Esophagus muscularis mucosa (tissue), 4 donors: ENCODE measurements at regions of chr21 and their contacts with region 1.

Region 1: GRCh38 chr21:25708467-25709065 is 26.1 kb downstream of the ATP5PF start:
- DNase-seq: no peak
- H3K4me3 ChIP-seq: no peak overlapping the region
- H3K27ac ChIP-seq: no peak overlapping the region
- H3K4me1 ChIP-seq: peaks cover 0 to 3% (median 0%) of the 10 kb centered on the region in 4 donors
- H3K27me3 ChIP-seq: no peaks in the 10 kb centered on the region
- CTCF ChIP-seq: peak; percentile 82 to 85 (median 83)
- EP300 ChIP-seq: no peak
- POLR2A ChIP-seq: no peak

Region 2: DNA sequence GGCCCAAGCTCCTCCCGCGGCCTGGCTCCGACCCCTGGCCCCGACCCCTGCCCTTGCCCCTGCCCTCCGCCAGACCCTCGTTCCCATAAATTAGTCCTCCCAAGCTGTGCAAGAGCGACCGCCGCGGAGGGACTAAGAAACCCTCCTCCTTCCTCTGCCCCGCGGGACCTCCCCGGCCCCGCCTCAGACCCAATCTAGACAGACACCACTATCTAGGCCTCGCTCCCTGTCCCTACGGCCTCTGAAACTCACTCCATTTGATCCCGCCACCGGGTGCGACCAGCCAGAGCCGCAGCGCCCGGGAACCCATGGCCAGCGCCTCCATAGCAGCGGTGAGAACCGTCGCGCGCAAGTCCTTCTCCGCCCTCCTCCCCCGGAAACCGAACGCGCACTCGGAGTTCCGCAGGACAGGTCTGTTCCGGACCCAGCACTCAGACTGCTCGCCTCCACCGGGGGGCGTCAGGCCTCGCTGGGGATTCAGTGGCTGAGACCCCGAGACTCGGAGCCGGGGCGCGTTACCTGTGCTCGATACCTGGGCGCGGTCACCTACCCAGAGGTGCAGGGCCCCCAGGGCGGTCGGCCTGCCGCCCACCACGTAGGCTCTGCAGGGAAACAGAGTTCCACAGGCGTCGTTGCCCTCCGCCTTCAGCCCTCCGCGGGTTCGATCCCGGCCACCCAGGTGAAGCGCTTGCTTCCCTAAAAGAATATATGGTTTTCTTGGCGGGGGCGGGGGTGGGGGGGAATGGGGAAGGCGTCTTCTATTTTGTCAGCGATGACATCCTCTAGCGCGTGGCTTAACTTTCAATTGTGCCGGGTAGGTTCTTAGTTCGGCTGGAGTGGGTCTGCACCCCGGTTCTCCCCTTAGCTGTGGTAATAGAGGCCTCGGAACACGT is 101.2 kb before region 1 on chr21 and contains the start of gene MRPL39:
- intact Hi-C with region 1: loop called (anchors 1 kb)
- DNase-seq: peak; percentile 95
- H3K4me3 ChIP-seq: peak within 1 kb of the TSS; percentile 65 to 93 (median 82)
- H3K27ac ChIP-seq: peak within 1 kb of the TSS; percentile 77 to 88 (median 83)
- H3K4me1 ChIP-seq: peaks cover 13 to 55% (median 37%) of the 10 kb centered on the region in 4 donors
- H3K27me3 ChIP-seq: no peaks in the 10 kb centered on the region
- CTCF ChIP-seq: peak; percentile 44 to 59 (median 54)
- EP300 ChIP-seq: no peak
- POLR2A ChIP-seq: no peak
- total RNA-seq, gene MRPL39: 22.0 to 31.8 (median 27.4) TPM

Region 3: DNA sequence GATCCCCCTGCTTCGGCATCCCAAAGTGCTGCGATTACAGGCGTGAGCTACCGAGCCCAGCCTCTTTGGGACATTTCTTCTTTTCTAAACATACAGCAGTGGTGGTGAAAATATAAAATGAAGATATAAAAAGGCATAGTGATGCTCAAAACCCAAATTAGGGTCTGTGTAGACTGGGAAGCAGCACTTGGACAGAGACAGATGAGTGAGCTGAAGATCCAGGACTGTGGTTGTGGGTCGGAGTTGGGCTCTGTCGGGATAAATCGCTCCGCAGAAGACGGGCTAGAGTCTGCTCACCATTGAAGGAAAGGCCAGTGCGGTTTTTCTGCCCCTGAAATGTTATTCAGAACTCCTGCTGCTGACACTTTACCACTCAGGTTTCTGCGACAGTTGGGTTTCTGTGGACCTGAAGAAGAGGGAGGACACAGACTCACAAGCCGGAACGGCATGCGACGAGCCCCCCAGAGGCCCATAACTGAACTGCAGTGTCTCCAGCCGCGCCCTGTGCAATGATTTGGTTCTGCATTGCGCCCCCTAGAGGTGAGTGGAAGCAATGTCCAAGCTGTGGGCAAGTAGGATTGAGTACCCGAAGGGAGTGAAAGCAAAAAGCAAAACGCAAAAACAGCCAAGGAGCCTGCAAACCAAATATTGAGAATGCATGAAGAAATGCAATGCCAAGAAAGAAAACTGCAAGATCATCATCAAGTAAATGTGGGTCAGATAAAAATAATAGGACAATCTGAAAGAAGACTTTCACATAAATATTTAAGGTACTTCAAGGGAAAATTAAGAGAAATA is 92.8 kb after region 1 on chr21:
- intact Hi-C with region 1: no loop called
- DNase-seq: peak; percentile 92
- H3K4me3 ChIP-seq: no peak overlapping the region
- H3K27ac ChIP-seq: no peak overlapping the region
- H3K4me1 ChIP-seq: peaks cover 0 to 6% (median 4%) of the 10 kb centered on the region in 4 donors
- H3K27me3 ChIP-seq: no peaks in the 10 kb centered on the region
- CTCF ChIP-seq: peak; percentile 75 to 90 (median 83)
- EP300 ChIP-seq: no peak
- POLR2A ChIP-seq: no peak